Activated T-helper 2 cell treated with anti-CD3 and anti-CD28 coated beads, Interferon-gamma antibody, Interleukin-2, Interleukin-4, amounts not matched to agents 10 μg/mL and 5 μg/mL and 100 μg/mL, durations not matched to agents 14 hours and 24 hours and 36 hours (primary cell): ENCODE measurements at regions of chr4 and their contacts with region 1.

Region 1: DNA sequence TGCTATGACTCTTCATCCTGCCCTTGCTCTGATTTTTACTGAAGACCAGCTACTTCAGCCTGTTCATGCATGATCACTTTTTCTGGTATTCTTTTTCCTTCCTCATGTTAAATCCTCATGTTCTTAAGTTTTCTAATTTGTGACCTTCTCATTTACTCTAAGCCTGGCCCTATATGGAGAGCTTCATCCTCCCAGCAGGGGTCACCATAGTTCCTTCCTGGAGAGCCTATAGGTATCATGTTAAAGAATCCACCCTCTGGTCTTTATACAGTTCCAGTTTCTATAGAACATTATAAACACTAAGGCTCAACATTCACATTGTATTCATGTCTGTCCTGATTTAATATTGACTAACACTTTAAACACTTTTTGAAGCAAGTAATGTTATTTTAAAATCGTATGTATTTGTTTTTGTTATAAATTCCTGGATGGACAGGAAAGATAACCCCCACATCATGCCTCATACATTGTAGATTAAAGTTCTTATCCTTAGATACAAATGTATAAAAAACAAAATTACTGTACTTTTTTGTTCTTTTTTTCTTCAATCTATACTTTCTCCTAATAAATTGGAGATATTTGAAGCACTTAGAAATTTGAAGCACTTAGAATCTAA is 53.8 kb upstream of the OTUD4 start:
- DNase-seq: peak; percentile 14
- H3K4me3 Mint-ChIP-seq: no peak overlapping the region
- H3K27ac Mint-ChIP-seq: no peak overlapping the region
- H3K4me1 Mint-ChIP-seq: no peaks in the 10 kb centered on the region
- H3K27me3 Mint-ChIP-seq: peaks cover 17% of the 10 kb centered on the region

Region 2: GRCh38 chr4:145487631-145488030 is 253.4 kb after region 1 on chr4:
- intact Hi-C with region 1: loop called (anchors 5 kb)
- DNase-seq: no peak
- H3K4me3 Mint-ChIP-seq: peak overlapping the region; percentile 20
- H3K27ac Mint-ChIP-seq: peak overlapping the region; percentile 29
- H3K4me1 Mint-ChIP-seq: peaks cover 17% of the 10 kb centered on the region
- H3K27me3 Mint-ChIP-seq: peaks cover 13% of the 10 kb centered on the region

Region 3: DNA sequence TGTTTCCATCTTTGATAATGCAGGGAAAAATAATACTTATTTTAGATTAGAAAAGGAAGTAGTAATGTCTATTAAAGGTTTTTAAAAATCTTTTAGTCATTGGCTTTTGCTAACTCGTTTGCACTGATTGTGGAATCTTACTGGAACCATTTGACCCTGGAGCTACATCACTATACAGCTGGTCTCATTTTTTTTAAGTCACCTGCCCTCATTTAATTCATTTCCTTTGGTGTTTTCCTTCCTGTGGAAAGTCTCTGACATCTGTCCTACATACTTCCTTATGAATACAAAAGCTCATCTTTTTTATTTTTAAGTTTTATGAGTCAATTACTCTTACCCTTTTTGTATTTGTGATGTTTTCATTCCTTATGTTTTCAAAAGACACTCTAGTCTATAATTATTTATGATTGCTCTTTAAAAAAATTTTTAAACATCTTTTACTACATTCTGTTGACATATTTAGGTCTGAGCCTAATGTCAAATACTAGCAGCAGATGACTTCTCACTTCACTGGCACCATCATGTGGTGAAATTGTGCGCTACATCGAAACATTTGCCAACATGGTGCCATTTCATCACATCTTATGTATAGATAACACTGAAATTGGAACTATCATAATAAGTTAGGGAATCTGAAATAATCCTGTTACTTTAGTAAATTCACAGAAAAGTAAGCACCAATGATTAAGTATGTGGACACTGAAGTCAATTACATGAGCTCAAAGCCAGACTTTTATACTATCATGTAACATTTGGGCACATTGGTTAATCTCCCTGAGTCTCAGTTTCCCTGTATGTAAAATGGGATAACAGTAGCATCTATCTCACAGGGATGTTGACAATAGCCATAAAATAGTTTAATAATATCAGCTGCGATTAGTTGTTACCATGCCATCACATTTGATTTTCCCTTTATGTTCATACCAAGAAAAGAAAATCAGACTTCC is 375.6 kb after region 1 on chr4:
- intact Hi-C with region 1: loop called (anchors 1 kb)
- DNase-seq: peak; percentile 44
- H3K4me3 Mint-ChIP-seq: no peak overlapping the region
- H3K27ac Mint-ChIP-seq: no peak overlapping the region
- H3K4me1 Mint-ChIP-seq: peaks cover 14% of the 10 kb centered on the region
- H3K27me3 Mint-ChIP-seq: peaks cover 7% of the 10 kb centered on the region